AG04450 (cell line): ENCODE measurements at regions of chr11 and their contacts with region 1.

Region 1: GRCh38 chr11:62831520-62832335 is at the start of gene STX5:
- DNase-seq: peak; percentile 97
- H3K4me3 ChIP-seq: peak within 1 kb of the TSS; percentile 85
- H3K27ac ChIP-seq: peak within 1 kb of the TSS; percentile 99
- H3K27me3 ChIP-seq: no peaks in the 10 kb centered on the region
- CTCF ChIP-seq: no peak
- polyA plus RNA-seq, gene STX5: 51.7 and 52.1 TPM in 2 replicates

Region 2: GRCh38 chr11:62726915-62727763 is 104.6 kb before region 1 on chr11 and contains the start of gene HNRNPUL2:
- CTCF ChIA-PET with region 1: no interaction called
- POLR2A ChIA-PET with region 1: interaction called, 19 read pairs
- DNase-seq: peak; percentile 99
- H3K4me3 ChIP-seq: peak within 1 kb of the TSS; percentile 99
- H3K27ac ChIP-seq: peak within 1 kb of the TSS; percentile 98
- H3K27me3 ChIP-seq: no peaks in the 10 kb centered on the region
- CTCF ChIP-seq: 0 out of 2 replicates have a peak, but pooled peaks have one; percentile 11
- polyA plus RNA-seq, gene HNRNPUL2: 26.6 and 28.2 TPM in 2 replicates

Region 3: DNA sequence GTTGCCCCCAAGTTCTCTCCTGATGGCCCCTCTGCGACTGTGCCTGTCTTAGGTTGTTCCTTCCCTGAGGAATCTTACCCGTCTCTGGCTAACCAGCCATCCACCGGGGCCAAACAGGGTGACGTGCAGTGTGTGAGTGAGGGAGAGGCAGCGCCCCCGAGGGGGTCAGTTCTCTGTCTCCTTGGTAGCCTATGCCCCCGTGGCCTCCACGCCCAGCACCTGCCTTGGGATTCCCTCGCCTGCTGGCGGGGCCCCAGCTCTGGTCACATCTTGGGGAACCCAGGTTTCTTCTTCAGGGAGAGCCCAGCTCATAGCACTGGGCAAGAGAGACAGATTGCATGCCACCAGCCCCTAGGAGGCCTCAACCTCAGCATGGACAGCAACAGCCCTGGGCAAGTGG is 32.2 kb before region 1 on chr11:
- CTCF ChIA-PET with region 1: no interaction called
- POLR2A ChIA-PET with region 1: interaction called, 14 read pairs
- DNase-seq: no peak
- H3K4me3 ChIP-seq: no peak overlapping the region
- H3K27ac ChIP-seq: no peak overlapping the region
- H3K27me3 ChIP-seq: no peaks in the 10 kb centered on the region
- CTCF ChIP-seq: no peak

Region 4: GRCh38 chr11:62855571-62856332 is 24.0 kb after region 1 on chr11:
- CTCF ChIA-PET with region 1: no interaction called
- POLR2A ChIA-PET with region 1: interaction called, 18 read pairs
- DNase-seq: peak; percentile 98
- H3K4me3 ChIP-seq: peak overlapping the region; percentile 96
- H3K27ac ChIP-seq: peak overlapping the region; percentile 91
- H3K27me3 ChIP-seq: no peaks in the 10 kb centered on the region
- CTCF ChIP-seq: no peak